ENCODE measurements at regions of chr7 and their contacts with region 1.

Region 1: DNA sequence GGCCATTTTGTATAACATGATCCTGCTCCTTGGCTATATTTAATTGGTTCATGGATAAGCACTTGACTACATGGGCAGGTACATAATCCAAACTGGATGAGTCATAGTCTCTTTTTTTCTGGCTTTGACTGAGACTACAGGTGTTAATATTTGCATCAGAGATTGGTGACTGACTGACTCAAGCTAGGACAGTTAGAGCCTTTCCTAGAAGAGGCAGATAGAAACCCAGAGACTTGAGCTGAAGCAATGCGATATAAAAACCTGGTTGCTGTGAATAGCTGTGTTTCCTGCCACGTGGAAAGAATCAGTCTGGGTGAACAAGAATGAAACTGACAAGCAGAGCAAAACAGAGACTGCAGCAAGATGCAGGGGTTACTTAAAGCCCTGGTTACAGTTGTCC is 81.0 kb downstream of the SAMD9 start:
- DNase-seq: peak; percentile 83
- H3K4me3 Mint-ChIP-seq: no peak overlapping the region
- H3K27ac Mint-ChIP-seq: peak overlapping the region; percentile 74
- H3K4me1 Mint-ChIP-seq: peaks cover 26% of the 10 kb centered on the region
- H3K27me3 Mint-ChIP-seq: no peaks in the 10 kb centered on the region

Region 2: DNA sequence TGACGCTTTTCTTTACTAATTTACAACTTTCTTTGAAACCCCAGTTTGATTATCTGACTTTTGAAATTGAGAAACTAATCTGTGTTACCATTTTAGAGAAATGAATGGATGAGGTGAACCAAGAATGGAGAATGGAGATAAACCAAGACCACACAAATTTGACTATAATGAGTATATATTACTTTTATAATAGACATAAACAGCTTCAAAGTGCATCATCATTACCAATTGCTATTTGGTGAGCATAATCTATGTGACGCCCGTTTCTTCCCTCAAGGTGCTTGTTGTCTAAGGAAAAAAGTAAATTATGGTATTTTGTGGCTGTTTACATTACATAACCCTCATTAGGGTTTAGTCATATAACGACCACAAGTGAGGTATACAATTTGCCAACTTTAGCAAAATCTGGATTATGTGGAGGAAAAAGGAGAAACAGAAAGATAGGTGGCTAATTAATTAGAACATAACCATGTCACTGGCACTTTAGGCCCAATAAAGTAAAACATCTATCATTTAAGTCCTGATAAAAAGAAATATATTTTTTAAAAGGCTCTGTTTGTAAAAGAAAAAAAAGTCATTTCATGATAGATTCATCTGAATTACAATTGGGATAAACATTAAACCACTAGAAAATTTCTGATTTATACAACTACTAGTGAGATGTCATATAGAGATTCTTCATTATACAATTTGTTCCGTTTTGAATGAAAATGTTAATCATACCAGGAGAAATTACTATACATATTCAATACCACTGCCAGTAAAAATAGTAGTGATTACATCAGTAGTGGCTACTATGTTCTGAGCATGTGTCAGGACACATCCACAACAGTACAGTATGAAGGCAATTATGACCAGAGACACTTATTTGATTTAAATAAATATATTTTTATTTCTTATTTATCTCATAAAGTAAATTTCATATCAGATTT is 328.4 kb before region 1 on chr7:
- intact Hi-C with region 1: loop called (anchors 5 kb)
- DNase-seq: no peak
- H3K4me3 Mint-ChIP-seq: no peak overlapping the region
- H3K27ac Mint-ChIP-seq: peak overlapping the region; percentile 79
- H3K4me1 Mint-ChIP-seq: peaks cover 34% of the 10 kb centered on the region
- H3K27me3 Mint-ChIP-seq: no peaks in the 10 kb centered on the region

Region 3: GRCh38 chr7:92953657-92954056 is 83.2 kb before region 1 on chr7:
- intact Hi-C with region 1: loop called (anchors 10 kb)
- DNase-seq: no peak
- H3K4me3 Mint-ChIP-seq: no peak overlapping the region
- H3K27ac Mint-ChIP-seq: peak overlapping the region; percentile 78
- H3K4me1 Mint-ChIP-seq: peaks cover 14% of the 10 kb centered on the region
- H3K27me3 Mint-ChIP-seq: no peaks in the 10 kb centered on the region

Region 4: DNA sequence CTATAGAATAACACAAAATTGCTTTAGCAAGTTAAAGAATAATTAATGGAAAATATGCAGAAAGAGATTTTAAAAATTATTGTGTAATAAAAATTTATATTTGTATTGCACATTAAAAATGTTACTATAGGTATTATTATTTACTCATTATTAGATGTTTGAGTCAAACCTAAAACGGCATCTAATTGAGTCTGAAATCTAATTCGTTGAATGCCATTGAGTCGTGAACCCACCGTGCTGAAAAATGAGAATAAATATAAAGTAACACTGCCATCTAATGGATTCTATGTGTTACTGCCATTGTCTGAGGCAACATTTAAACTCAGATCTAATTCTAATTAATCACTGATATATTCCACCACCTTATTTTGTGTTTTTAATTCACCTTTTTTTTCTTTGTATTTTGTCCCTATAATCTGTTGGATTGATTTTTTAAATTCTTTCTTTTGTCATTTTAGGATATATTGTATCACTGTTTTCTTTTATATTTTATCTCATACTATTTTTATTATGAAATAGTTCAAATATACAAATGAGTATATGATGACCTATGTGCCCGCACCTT is 18.8 kb after region 1 on chr7:
- intact Hi-C with region 1: loop called (anchors 2 kb)
- DNase-seq: peak; percentile 62
- H3K4me3 Mint-ChIP-seq: no peak overlapping the region
- H3K27ac Mint-ChIP-seq: no peak overlapping the region
- H3K4me1 Mint-ChIP-seq: peaks cover 13% of the 10 kb centered on the region
- H3K27me3 Mint-ChIP-seq: peaks cover 6% of the 10 kb centered on the region

Region 5: DNA sequence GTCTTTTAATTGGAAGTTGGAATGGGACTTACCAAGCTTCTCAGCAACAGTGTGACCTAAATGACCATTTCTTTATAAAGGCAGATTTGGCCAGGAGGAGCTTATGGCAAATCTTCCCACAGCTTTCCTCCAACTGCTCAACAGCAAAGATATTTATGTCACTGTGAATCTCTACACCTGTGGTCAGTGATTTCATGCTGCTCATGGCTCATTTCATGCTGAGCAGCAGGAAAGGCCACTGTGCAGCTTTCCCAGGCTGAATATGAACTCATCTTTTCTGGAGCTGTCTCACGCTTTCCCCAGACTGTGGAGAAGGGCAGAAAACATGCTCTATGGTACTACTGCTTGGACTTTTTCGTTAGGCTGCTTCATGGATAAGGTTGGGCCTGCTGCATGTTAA is 507.9 kb after region 1 on chr7:
- intact Hi-C with region 1: no loop called
- DNase-seq: no peak
- H3K4me3 Mint-ChIP-seq: no peak overlapping the region
- H3K27ac Mint-ChIP-seq: no peak overlapping the region
- H3K4me1 Mint-ChIP-seq: no peaks in the 10 kb centered on the region
- H3K27me3 Mint-ChIP-seq: no peaks in the 10 kb centered on the region

Measured in activated CD4-positive, alpha-beta T cell treated with anti-CD3 and anti-CD28 coated beads, Interleukin-2, amount 10 ng/mL, durations not matched to agents 24 days and 14 days (primary cell).